Transverse colon (tissue), 4 donors: ENCODE measurements at regions of chr6 and their contacts with region 1.

Region 1: DNA sequence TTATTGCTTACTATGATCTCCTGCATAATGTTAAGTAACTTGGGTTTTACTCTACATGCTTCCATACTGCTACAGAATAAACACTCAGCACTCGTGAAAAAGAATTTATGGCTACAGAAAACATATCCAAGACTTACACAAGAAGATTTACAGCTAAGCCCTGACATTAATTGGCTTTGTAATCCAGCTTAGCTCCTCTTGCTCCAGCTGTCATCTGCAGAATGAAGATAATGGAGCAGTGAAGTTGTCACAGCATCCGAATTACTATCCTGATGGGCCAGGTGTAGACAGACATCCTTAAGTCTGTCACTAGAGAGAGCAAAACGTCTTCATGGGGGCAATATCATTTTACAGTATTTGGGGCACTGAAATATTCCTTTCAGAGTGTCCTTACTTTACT is 155.3 kb downstream of the PRKN start:
- DNase-seq: no peak
- H3K4me3 ChIP-seq: no peak overlapping the region
- H3K27ac ChIP-seq: no peak overlapping the region
- H3K4me1 ChIP-seq: no peaks in the 10 kb centered on the region
- H3K27me3 ChIP-seq: no peaks in the 10 kb centered on the region
- CTCF ChIP-seq: no peak
- EP300 ChIP-seq: no peak
- POLR2A ChIP-seq: no peak

Region 2: DNA sequence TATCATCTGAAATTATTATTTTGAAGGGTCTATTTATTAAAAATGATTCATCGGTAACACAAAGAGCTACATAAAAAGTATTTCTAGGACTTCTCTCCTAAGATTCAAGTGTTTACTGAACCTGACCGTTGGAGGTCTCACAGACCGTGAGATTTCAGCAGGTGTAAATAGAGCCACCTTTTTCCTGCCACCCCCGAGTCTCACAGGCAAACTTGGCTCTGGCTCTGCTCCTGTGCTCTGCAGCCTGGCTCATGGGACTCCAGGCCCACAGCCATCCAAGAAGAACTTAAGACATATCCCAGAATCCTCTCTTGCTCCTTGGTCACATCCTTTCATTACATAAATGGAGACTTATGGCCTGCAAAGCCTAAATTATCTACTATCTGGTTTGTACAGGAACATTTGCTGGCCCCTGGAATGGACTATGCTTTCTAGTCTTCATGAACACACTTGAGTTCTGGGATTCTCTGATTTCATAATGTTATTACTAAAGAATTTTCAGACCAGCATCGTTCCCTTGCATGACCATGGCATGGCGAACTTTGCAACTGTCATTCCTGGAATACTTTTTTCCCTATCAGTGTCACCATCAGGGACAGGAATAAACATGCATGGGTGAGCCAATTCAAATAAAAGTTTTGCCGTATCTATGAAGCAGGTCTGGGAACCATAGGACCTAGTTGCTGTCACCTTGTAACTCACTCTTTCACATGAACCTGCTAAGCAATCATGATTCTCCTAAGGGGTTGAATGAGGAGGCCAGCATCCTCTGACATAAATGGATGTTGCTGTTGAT is 1230.4 kb before region 1 on chr6:
- in situ Hi-C with region 1: no loop called
- intact Hi-C with region 1: no loop called
- DNase-seq: no peak
- H3K4me3 ChIP-seq: no peak overlapping the region
- H3K27ac ChIP-seq: no peak overlapping the region
- H3K4me1 ChIP-seq: no peaks in the 10 kb centered on the region
- H3K27me3 ChIP-seq: no peaks in the 10 kb centered on the region
- CTCF ChIP-seq: no peak
- EP300 ChIP-seq: no peak
- POLR2A ChIP-seq: no peak

Region 3: DNA sequence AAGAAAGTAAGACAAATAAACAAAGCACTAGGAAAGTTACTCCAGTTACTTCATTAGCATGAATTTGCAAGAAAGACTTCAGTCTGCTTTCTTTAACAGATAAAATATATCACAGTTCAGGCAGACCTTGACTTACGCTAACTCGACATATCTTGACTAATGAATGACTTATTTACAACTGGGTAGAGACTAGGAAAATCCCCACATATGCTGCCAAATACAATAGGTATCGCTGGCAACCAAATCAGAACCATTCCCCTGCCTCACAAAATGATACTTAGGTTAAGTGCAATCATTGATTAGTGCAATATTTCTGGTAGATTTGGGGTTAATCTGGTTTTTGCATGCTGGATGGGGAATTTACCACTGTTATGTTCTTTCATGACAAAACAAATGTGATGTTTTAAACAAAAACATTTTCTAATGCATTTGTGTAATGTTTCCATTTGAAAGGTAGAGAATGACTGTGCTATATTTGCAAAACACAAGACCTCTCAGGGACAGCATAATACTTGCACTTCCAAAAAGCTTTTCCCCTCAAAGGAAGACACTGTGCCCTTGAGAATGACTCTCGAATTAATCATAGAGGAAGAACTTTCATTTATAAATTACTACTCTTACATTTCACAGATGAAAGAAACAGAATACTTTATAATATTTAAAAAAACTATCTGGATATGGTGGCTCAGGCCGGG is 53.8 kb after region 1 on chr6:
- in situ Hi-C with region 1: no loop called
- intact Hi-C with region 1: loop called (anchors 2 kb)
- DNase-seq: no peak
- H3K4me3 ChIP-seq: no peak overlapping the region
- H3K27ac ChIP-seq: no peak overlapping the region
- H3K4me1 ChIP-seq: peaks cover 0 to 13% (median 0%) of the 10 kb centered on the region in 4 donors
- H3K27me3 ChIP-seq: no peaks in the 10 kb centered on the region
- CTCF ChIP-seq: no peak
- EP300 ChIP-seq: no peak
- POLR2A ChIP-seq: no peak

Region 4: DNA sequence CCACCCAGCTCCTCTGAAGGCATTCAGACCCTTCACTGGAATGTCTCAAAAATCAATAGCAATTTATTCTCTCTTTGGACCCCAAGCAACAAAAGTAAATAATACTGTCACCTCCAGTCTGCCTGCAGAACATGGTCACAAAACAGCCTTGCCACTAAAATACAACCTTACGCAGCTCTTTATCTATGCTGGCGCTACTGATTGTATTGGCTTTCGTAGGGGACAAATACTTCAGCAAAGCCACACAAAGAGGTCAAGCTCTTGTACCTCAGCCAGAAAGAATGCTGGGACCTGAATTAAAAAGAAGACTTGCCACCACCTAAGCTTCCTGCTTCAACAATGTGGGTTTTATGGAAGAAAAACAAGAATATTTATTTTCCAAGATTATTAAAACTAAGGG is 98.1 kb after region 1 on chr6:
- in situ Hi-C with region 1: no loop called
- intact Hi-C with region 1: no loop called
- DNase-seq: no peak
- H3K4me3 ChIP-seq: no peak overlapping the region
- H3K27ac ChIP-seq: no peak overlapping the region
- H3K4me1 ChIP-seq: no peaks in the 10 kb centered on the region
- H3K27me3 ChIP-seq: no peaks in the 10 kb centered on the region
- CTCF ChIP-seq: no peak
- EP300 ChIP-seq: no peak
- POLR2A ChIP-seq: no peak

Region 5: GRCh38 chr6:163098827-163099479 is 526.7 kb after region 1 on chr6:
- in situ Hi-C with region 1: no loop called
- intact Hi-C with region 1: loop called (anchors 5 kb)
- DNase-seq: no peak
- H3K4me3 ChIP-seq: no peak overlapping the region
- H3K27ac ChIP-seq: no peak overlapping the region
- H3K4me1 ChIP-seq: no peaks in the 10 kb centered on the region
- H3K27me3 ChIP-seq: no peaks in the 10 kb centered on the region
- CTCF ChIP-seq: no peak
- EP300 ChIP-seq: no peak
- POLR2A ChIP-seq: no peak